Heart right ventricle (tissue), 16 donors: ENCODE measurements at regions of chr15 and their contacts with region 1.

Region 1: DNA sequence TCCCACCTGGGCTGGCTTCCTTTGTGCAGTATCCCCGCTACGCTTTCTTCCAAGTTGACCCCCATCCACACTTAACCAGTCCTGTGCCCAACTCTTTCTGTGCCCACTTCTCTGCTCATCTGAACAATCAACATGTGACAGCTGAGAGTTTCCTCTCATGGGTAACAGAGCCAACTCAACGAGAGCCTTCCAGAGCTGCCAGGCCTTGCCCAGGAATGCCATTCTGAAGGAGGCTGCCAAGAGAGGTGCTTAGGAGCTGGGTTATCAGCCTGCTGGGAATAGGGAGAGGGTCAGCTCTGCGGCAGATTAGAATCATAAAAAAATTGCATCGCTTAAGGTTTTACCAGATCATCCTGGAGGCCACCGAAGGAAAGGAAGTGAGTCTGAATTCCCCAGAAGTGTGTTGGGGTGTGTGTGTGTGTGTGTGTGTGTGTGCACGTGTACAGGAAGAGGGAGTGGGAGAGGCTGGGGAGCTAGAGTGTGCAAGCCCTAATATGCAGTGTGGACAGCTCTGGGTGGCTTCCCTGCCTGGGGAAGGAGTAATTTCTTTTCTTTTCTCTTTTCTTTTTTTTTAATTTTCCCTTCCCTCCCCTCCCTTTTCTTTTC is 66.7 kb downstream of the ITGA11 start:
- DNase-seq: peak in 1 of 2 donors; percentile 55
- ATAC-seq: peak; percentile 54 to 80 (median 66)
- H3K4me3 ChIP-seq: no peak overlapping the region
- H3K27ac ChIP-seq: peak overlapping the region; percentile 75 to 93 (median 83)
- H3K4me1 ChIP-seq: peaks cover 53 to 98% (median 82%) of the 10 kb centered on the region in 9 donors
- H3K27me3 ChIP-seq: no peaks in the 10 kb centered on the region
- CTCF ChIP-seq: no peak

Region 2: GRCh38 chr15:68080783-68081182 is 284.5 kb before region 1 on chr15:
- intact Hi-C with region 1: no loop called
- DNase-seq: no peak
- ATAC-seq: no peak
- H3K4me3 ChIP-seq: no peak overlapping the region
- H3K27ac ChIP-seq: no peak overlapping the region
- H3K4me1 ChIP-seq: peaks cover 7 to 97% (median 76%) of the 10 kb centered on the region in 9 donors
- H3K27me3 ChIP-seq: no peaks in the 10 kb centered on the region
- CTCF ChIP-seq: no peak

Region 3: GRCh38 chr15:68319997-68320396 is 45.2 kb before region 1 on chr15:
- intact Hi-C with region 1: loop called in 1 of 10 experiments (anchors 5 kb)
- DNase-seq: no peak
- ATAC-seq: no peak
- H3K4me3 ChIP-seq: no peak overlapping the region
- H3K27ac ChIP-seq: no peak overlapping the region
- H3K4me1 ChIP-seq: peaks cover 0 to 19% (median 13%) of the 10 kb centered on the region in 9 donors
- H3K27me3 ChIP-seq: no peaks in the 10 kb centered on the region
- CTCF ChIP-seq: no peak

Region 4: DNA sequence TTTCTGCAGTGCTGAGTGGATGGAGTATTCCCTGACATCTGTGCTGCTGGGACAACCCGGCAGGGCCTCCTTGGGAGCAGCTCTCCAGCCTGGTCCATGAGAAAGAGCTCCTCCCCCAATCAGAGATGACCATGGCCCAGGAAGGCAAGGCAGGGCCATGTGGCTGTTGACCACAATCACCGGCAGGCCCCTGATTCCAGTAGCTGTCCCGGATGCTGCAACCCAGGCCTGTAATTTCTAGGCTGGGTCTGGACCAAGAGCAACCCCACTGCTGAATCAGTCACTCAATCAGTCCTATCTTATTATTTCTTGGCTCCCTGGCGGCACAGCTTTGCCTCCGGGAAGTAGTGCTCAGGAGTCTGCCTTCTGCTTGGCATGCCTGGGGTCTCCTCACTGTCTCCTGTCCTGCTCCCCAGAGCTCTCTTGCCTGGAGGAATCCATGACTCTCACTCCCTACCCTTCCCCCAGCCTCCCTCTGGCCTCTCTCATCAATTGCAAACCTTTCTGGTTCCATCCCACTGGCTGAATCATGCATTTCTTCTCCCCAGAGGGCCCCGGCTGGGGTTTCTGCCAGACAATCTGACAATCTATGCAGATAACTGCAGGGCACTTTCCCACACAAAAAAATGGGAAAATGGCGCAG is 99.3 kb after region 1 on chr15:
- intact Hi-C with region 1: no loop called
- DNase-seq: no peak
- ATAC-seq: no peak
- H3K4me3 ChIP-seq: no peak overlapping the region
- H3K27ac ChIP-seq: no peak overlapping the region
- H3K4me1 ChIP-seq: peaks cover 0 to 11% (median 0%) of the 10 kb centered on the region in 9 donors
- H3K27me3 ChIP-seq: peaks cover 0 to 11% (median 0%) of the 10 kb centered on the region in 7 donors
- CTCF ChIP-seq: no peak